ENCODE measurements at regions of chr7 and their contacts with region 1.

Region 1: DNA sequence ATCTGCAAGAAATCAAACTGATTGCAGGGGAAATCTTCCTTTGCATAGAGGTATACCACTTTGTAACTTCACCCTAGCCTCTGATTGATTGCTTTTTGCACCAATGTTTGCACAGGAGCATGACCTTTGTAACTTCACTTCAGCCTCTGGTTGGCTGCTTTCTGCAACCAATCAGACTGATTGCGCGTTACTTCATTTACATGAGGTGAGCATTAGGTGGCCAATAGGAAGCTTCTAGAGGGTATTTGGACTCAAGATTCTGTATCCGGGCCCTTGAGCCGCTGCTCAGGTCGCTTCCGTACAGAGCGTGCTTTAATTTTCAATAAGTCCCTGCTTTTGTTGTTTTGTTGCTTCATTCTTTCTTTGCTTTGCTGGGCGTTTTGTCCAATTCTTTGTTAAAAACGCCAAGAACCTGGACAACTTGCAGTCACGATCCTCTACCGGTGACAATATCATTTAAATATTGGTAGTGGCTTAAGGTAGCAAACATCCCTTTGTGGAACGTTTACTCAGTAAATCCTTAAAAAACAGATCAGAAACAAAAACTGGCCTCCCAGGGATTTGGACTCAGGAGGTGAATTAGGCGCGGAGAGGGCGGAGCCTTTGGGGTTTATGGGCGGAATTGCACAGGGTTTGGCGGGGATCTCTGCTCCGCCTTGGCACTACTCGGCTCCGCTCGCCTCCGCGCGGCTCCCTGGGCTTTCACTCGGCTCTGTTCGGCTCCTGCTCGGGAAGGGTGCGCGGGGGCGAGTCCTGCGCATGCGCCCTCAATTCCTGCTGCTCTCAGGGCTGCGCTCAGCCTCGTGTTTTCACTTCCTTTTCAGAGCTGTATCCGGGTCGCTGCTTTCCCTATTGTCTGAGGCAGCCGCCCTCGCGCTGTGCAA is at the start of gene PHF14:
- DNase-seq: peak; percentile 97 to 99
- ATAC-seq: peak; percentile 98 to 100 (median 98)
- H3K4me3 ChIP-seq: peak within 1 kb of the TSS; percentile 84
- H3K27ac ChIP-seq: peak within 1 kb of the TSS; percentile 82
- H3K4me1 ChIP-seq: peaks cover 7% of the 10 kb centered on the region
- H3K27me3 ChIP-seq: no peaks in the 10 kb centered on the region
- CTCF ChIP-seq: no peak
- total RNA-seq, gene PHF14: 12.4 to 17.8 (median 13.6) TPM

Region 2: GRCh38 chr7:10860516-10860915 is 112.8 kb before region 1 on chr7:
- intact Hi-C with region 1: no loop called
- DNase-seq: no peak
- ATAC-seq: no peak
- H3K4me3 ChIP-seq: no peak overlapping the region
- H3K27ac ChIP-seq: no peak overlapping the region
- H3K4me1 ChIP-seq: no peaks in the 10 kb centered on the region
- H3K27me3 ChIP-seq: peaks cover 0 to 2% (median 0%) of the 10 kb centered on the region in 3 donors
- CTCF ChIP-seq: no peak

Region 3: GRCh38 chr7:10939911-10940703 is 33.2 kb before region 1 on chr7:
- intact Hi-C with region 1: loop called (anchors 2 to 5 kb)
- DNase-seq: peak; percentile 91 to 94
- ATAC-seq: peak; percentile 97 to 99 (median 98)
- H3K4me3 ChIP-seq: peak overlapping the region; percentile 88
- H3K27ac ChIP-seq: peak overlapping the region; percentile 87
- H3K4me1 ChIP-seq: peaks cover 34% of the 10 kb centered on the region
- H3K27me3 ChIP-seq: no peaks in the 10 kb centered on the region
- CTCF ChIP-seq: no peak